IMR-90 (cell line): ENCODE measurements at regions of chr22 and their contacts with region 1.

Region 1: GRCh38 chr22:40679964-40680818 is 907 bp downstream of the MCHR1 start:
- DNase-seq: peak; percentile 31
- ATAC-seq: no peak
- H3K4me3 ChIP-seq: no peak overlapping the region
- H3K27ac ChIP-seq: no peak overlapping the region
- H3K4me1 ChIP-seq: peaks cover 16% of the 10 kb centered on the region
- H3K27me3 ChIP-seq: no peaks in the 10 kb centered on the region
- CTCF ChIP-seq: no peak
- POLR2A ChIP-seq: no peak
- RAD21 ChIP-seq: no peak

Region 2: DNA sequence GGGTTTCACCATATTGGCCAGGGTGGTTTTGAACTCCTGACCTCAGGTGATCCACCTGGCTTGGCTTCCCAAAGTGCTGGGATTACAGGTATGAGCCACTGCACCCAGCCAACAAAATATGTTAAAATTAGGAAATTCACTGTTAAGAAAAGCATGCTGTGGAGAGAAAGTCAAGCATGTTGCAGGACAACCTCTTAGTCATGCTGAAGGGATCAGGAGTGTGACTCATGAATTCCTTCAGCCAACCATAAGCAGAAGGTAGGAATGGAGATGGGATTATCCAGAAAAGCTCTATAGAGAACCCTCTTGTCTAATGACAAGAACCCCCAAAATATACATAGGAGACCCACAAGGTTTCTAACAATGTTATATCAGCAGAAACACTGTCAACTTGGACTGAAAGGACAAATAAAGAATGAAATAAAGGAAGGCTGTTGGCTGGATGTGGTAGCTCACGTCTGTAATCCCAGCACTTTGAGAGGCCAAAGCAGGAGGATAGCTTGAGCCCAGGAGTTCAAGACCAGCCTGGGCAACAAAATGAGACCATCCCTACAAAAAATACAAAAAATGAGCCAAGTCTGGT is 59.6 kb before region 1 on chr22:
- CTCF ChIA-PET with region 1: no interaction called
- POLR2A ChIA-PET with region 1: no interaction called
- dilution Hi-C with region 1: no loop called
- in situ Hi-C with region 1: no loop called
- intact Hi-C with region 1: no loop called
- DNase-seq: peak; percentile 80
- ATAC-seq: peak; percentile 74
- H3K4me3 ChIP-seq: no peak overlapping the region
- H3K27ac ChIP-seq: no peak overlapping the region
- H3K4me1 ChIP-seq: peaks cover 3% of the 10 kb centered on the region; the same call in 1 of the 2 replicates
- H3K27me3 ChIP-seq: no peaks in the 10 kb centered on the region
- CTCF ChIP-seq: no peak
- POLR2A ChIP-seq: no peak
- RAD21 ChIP-seq: no peak

Region 3: GRCh38 chr22:40757071-40757470 is 76.9 kb after region 1 on chr22:
- CTCF ChIA-PET with region 1: interaction called, 22 read pairs
- POLR2A ChIA-PET with region 1: no interaction called
- dilution Hi-C with region 1: no loop called
- in situ Hi-C with region 1: loop called (anchors 5 kb)
- intact Hi-C with region 1: loop called (anchors 1 kb)
- DNase-seq: peak; percentile 69
- ATAC-seq: peak; percentile 68
- H3K4me3 ChIP-seq: no peak overlapping the region
- H3K27ac ChIP-seq: no peak overlapping the region
- H3K4me1 ChIP-seq: peaks cover 3% of the 10 kb centered on the region; the same call in 1 of the 2 replicates
- H3K27me3 ChIP-seq: no peaks in the 10 kb centered on the region; the same call in 1 of the 2 replicates
- CTCF ChIP-seq: no peak
- POLR2A ChIP-seq: no peak
- RAD21 ChIP-seq: no peak

Region 4: DNA sequence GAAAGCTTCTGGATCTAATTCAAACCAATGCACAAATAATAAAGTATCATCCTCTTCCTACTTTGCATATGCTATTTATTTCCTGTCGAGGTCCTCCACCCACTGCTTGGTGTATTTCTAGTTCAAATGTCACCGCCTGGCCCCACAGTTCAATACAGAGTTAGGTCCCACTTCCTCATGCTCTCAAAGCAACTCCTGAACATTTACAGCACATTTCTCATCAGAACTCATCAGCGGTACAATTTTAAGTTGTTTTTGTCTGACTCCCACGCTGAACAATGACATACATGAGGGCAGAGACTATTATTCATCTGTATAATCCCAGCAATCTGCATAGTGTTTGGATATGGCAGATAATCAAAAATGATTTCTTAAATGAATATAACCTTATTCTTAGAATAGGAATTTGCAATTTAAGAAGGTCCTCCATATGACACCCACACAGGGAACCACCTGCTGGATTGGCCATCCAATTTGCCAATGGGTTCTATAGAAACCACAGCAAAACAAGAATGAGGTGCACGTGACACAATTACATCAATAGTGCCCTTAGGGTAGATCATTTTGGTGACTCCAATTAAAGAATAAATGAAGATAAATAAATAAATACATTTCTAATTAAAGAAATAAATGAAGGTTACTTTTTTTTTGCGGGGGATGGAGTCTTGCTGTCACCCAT is 84.7 kb after region 1 on chr22:
- CTCF ChIA-PET with region 1: interaction called, 22 read pairs
- POLR2A ChIA-PET with region 1: no interaction called
- dilution Hi-C with region 1: no loop called
- in situ Hi-C with region 1: loop called (anchors 5 kb)
- intact Hi-C with region 1: loop called (anchors 1 kb)
- DNase-seq: no peak
- ATAC-seq: no peak
- H3K4me3 ChIP-seq: no peak overlapping the region
- H3K27ac ChIP-seq: no peak overlapping the region
- H3K4me1 ChIP-seq: no peaks in the 10 kb centered on the region
- H3K27me3 ChIP-seq: no peaks in the 10 kb centered on the region
- CTCF ChIP-seq: no peak
- POLR2A ChIP-seq: no peak
- RAD21 ChIP-seq: no peak

Region 5: GRCh38 chr22:40818747-40819598 is 138.8 kb after region 1 on chr22 and contains the start of gene SLC25A17:
- CTCF ChIA-PET with region 1: no interaction called
- POLR2A ChIA-PET with region 1: no interaction called
- dilution Hi-C with region 1: no loop called
- in situ Hi-C with region 1: no loop called
- intact Hi-C with region 1: loop called (anchors 2 kb)
- DNase-seq: peak; percentile 69
- ATAC-seq: peak; percentile 97
- H3K4me3 ChIP-seq: peak within 1 kb of the TSS; percentile 90
- H3K27ac ChIP-seq: peak within 1 kb of the TSS; percentile 74
- H3K4me1 ChIP-seq: no peaks in the 10 kb centered on the region
- H3K27me3 ChIP-seq: no peaks in the 10 kb centered on the region
- CTCF ChIP-seq: peak; percentile 38
- POLR2A ChIP-seq: peak; percentile 65
- RAD21 ChIP-seq: peak; percentile 16; the same call in 1 of the 2 replicates
- total RNA-seq, gene SLC25A17: 31.7 and 36.0 TPM in 2 replicates